ENCODE measurements at regions of chr20 and their contacts with region 1.

Region 1: DNA sequence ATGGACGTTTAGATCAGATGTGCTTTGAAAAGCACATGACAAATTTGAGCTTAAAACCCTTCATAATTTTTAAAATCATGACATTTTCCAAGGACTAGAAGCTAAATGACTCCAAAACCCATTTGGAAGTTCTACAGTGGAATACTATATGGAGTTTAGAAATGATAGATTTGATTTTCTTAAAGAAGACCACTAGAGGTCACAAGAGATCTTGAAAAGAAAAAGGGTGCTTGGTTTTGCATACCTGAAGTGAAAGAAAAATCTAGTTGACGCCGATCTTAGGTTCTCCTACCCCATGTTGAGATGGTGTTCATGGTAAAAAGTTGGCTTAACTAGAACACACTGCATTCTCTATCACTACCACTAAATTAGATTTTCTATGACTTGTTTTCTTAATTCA is 31.5 kb downstream of the CFAP61 start:
- DNase-seq: peak; percentile 56
- H3K4me3 Mint-ChIP-seq: peak overlapping the region; percentile 20
- H3K27ac Mint-ChIP-seq: peak overlapping the region; percentile 95
- H3K4me1 Mint-ChIP-seq: peaks cover 44% of the 10 kb centered on the region
- H3K27me3 Mint-ChIP-seq: no peaks in the 10 kb centered on the region
- CTCF ChIP-seq: peak; percentile 55

Region 2: DNA sequence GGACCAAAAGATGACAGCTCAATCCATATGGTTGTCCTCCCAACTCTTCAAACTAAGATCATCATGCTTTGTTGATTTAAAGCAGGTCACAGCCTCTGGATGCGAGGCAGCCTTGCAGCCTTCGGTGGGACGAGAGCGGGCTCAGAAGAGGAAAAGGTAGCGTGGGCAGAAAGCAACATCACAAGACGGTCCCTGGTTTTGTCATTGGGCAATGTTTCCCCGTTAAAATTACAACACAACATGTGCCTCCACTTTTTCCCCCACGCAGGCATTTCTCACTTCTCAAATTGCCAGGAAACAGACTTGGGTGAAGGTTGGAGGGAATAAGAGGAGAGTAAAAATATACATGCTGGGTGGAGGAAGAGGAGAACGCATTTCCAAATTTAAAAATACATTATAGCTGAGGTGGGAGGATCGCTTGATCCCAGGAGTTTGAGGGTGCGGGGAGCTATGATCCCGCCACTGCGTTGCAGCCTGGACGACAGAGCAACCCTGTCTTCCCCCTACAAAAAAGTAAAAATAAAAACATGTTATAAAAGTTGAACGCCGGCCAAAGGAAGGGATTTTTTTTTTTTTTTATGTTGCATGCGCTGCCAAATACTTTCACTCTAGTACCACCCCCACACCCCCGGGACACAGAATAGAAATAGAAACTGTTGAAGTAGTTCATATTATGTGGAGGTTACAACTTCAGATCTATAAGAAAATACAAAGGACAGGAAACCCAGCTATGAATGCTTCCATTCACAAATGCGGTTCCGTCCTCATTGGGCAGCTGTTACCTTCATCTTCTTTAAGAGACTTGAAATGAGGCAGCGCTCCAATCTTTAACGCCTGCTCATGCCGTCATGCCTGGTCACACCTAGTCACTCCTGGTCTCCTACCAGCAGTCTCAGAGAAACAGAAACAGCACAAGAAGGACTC is 80.5 kb before region 1 on chr20:
- CTCF ChIA-PET with region 1: no interaction called
- POLR2A ChIA-PET with region 1: no interaction called
- intact Hi-C with region 1: no loop called
- DNase-seq: no peak
- H3K4me3 Mint-ChIP-seq: no peak overlapping the region
- H3K27ac Mint-ChIP-seq: no peak overlapping the region
- H3K4me1 Mint-ChIP-seq: peaks cover 6% of the 10 kb centered on the region
- H3K27me3 Mint-ChIP-seq: no peaks in the 10 kb centered on the region
- CTCF ChIP-seq: no peak

Region 3: GRCh38 chr20:20229595-20229994 is 145.8 kb after region 1 on chr20:
- CTCF ChIA-PET with region 1: interaction called, 10 read pairs
- POLR2A ChIA-PET with region 1: interaction called, 5 read pairs
- intact Hi-C with region 1: no loop called
- DNase-seq: peak; percentile 9
- H3K4me3 Mint-ChIP-seq: no peak overlapping the region
- H3K27ac Mint-ChIP-seq: no peak overlapping the region
- H3K4me1 Mint-ChIP-seq: peaks cover 11% of the 10 kb centered on the region
- H3K27me3 Mint-ChIP-seq: no peaks in the 10 kb centered on the region
- CTCF ChIP-seq: no peak

Region 4: DNA sequence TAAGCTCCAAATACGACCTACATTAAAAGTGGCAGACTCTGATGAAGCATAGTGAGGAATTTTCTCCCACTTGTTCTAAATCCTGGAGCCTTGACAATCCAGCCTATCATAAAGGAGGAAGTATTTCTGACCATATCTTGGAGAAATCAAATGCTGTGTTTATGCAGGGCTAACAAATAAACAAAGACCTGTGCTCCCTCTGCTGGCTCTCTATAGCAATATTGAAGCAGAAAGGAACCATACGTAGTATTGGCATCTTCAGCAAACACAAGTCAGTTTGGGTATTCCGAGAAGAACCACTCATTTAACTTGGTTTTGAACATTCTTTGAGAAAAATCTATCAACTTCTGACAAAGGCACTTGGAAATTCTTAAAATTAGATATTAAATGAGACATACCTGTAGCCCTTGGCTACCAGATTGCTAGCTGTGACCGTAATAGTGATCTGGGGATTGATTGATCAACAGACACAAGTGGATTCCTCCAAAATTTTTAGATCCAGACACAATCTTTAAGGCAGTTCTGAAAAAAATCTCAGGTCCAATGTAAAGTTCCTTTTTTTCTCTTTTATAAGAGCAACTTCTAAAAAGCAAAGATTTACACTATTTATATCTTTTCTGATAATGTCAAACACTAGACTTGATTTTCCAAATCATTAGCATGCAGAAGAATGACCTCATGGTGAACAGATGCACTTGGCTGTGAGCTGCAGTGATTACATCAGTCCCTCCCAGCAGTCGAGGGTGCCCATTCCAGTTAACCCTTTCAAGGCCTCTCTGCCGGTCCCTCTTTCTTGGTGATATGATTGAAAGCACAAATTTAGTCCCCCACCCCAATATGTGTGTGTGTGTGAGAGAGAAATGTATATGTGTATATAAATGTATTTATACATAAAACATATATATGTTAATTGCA is 324.3 kb after region 1 on chr20:
- CTCF ChIA-PET with region 1: interaction called, 3 read pairs
- POLR2A ChIA-PET with region 1: no interaction called
- intact Hi-C with region 1: loop called (anchors 2 kb)
- DNase-seq: peak; percentile 2
- H3K4me3 Mint-ChIP-seq: no peak overlapping the region
- H3K27ac Mint-ChIP-seq: no peak overlapping the region
- H3K4me1 Mint-ChIP-seq: no peaks in the 10 kb centered on the region
- H3K27me3 Mint-ChIP-seq: no peaks in the 10 kb centered on the region
- CTCF ChIP-seq: no peak

Region 5: GRCh38 chr20:20561841-20562240 is 478.0 kb after region 1 on chr20:
- CTCF ChIA-PET with region 1: interaction called, 24 read pairs
- POLR2A ChIA-PET with region 1: no interaction called
- intact Hi-C with region 1: no loop called
- DNase-seq: no peak
- H3K4me3 Mint-ChIP-seq: no peak overlapping the region
- H3K27ac Mint-ChIP-seq: no peak overlapping the region
- H3K4me1 Mint-ChIP-seq: no peaks in the 10 kb centered on the region
- H3K27me3 Mint-ChIP-seq: no peaks in the 10 kb centered on the region
- CTCF ChIP-seq: no peak

Measured in MCF 10A (cell line).